ENCODE measurements at regions of chr17 and their contacts with region 1.

Region 1: DNA sequence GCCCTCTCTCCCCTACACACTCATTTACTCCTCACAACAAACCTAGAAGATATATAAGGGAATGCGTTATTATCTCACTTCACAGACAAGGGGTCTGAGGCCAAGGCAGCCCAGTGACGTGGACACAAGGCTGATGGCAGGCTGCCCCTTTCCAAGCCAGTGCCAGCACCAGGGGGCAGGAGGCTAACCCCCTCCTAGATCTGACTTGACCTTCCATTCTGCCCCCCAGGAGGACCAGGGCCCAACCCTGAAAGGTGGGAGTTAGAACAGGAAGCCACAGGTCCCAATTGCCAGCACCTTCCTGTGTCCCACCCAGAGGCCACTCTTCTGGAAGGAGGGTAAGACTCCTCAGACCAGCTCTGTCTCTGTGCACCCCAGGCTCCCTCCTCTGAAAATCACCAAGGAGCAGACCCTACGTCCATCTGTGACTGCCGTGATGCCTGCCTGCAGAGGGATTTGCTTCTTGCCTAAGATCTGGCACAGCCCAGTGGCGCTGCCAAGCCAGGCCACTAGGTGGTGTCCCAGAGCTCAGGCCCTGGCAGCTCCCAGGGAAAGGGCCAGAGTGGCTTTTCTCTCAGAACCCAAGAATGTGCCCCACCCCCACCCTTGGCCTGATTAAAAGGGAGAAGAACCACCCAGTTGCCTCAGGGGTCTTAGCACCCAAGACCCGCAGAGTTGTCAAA is 42.4 kb upstream of the MRPS23 start:
- DNase-seq: peak; percentile 88
- ATAC-seq: peak; percentile 99
- H3K4me3 Mint-ChIP-seq: no peak overlapping the region
- H3K27ac Mint-ChIP-seq: no peak overlapping the region
- H3K4me1 Mint-ChIP-seq: no peaks in the 10 kb centered on the region
- H3K27me3 Mint-ChIP-seq: peaks cover 2% of the 10 kb centered on the region
- CTCF ChIP-seq: peak; percentile 87

Region 2: DNA sequence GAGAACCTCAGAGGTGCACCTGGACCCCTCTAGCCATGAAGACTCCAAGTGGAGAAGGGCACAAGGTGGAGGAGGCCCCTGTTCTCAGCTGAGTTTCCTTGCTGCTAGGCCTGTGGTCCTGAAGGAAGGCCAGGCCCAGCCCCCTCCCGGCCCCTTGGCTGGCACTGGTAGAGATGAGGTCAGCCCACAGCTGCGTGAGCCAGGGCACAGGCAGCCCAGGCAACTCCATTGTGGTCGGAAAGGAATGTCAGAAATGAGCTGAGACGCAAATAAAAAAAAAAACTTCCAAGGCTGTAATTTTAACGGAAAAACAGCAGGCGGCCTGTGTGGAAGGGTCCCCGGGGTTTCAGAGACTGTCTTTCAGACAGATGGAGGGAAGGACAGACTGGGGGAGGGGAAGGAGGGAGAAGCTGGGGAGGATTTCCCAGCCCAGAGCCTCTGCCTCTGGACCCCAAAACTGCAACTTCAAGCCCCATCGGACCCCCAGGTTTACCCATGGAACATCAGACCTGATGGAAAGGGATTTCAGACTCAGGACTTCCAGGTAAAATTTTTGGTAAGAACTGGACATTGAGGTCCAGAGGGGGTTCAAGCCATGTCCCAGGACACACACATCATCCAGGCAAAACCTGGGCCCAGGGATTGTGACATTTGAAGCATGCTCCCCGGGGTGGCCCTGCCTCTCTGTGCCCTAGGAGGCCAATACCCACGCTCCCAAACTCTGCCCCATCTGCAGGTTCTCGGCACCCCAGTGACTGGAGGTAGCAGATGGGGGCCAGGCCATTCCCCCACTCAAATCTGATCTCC is 16.8 kb before region 1 on chr17:
- CTCF ChIA-PET with region 1: interaction called, 10 read pairs
- POLR2A ChIA-PET with region 1: interaction called, 3 read pairs
- intact Hi-C with region 1: no loop called
- DNase-seq: no peak
- ATAC-seq: no peak
- H3K4me3 Mint-ChIP-seq: no peak overlapping the region
- H3K27ac Mint-ChIP-seq: no peak overlapping the region
- H3K4me1 Mint-ChIP-seq: peaks cover 34% of the 10 kb centered on the region
- H3K27me3 Mint-ChIP-seq: peaks cover 23% of the 10 kb centered on the region
- CTCF ChIP-seq: no peak

Region 3: GRCh38 chr17:57955183-57955931 is 63.1 kb after region 1 on chr17 and contains the start of gene CUEDC1:
- CTCF ChIA-PET with region 1: interaction called, 26 read pairs
- POLR2A ChIA-PET with region 1: no interaction called
- intact Hi-C with region 1: no loop called
- DNase-seq: peak; percentile 63
- ATAC-seq: peak; percentile 74
- H3K4me3 Mint-ChIP-seq: peak within 1 kb of the TSS; percentile 49
- H3K27ac Mint-ChIP-seq: no peak within 1 kb of the TSS
- H3K4me1 Mint-ChIP-seq: peaks cover 24% of the 10 kb centered on the region
- H3K27me3 Mint-ChIP-seq: peaks cover 32% of the 10 kb centered on the region
- CTCF ChIP-seq: peak; percentile 38
- total RNA-seq, gene CUEDC1: 0.29 to 0.40 TPM

Measured in activated CD8-positive, alpha-beta T cell treated with anti-CD3 and anti-CD28 coated beads for 36 hours (primary cell).